GM12878 (cell line): ENCODE measurements at regions of chr14 and their contacts with region 1.

Region 1: GRCh38 chr14:89430391-89431236 is 13.6 kb upstream of the FOXN3 start:
- DNase-seq: peak; percentile 99
- ATAC-seq: peak; percentile 95
- H3K4me3 ChIP-seq: peak overlapping the region; percentile 29
- H3K27ac ChIP-seq: peak overlapping the region; percentile 97
- H3K4me1 ChIP-seq: peaks cover 49% of the 10 kb centered on the region
- H3K27me3 ChIP-seq: no peaks in the 10 kb centered on the region
- CTCF ChIP-seq: no peak
- EP300 ChIP-seq: peak; percentile 90 to 94
- POLR2A ChIP-seq: peak; percentile 37; the same call in 1 of the 2 replicates
- RAD21 ChIP-seq: peak; percentile 27; the same call in 1 of the 2 replicates

Region 2: GRCh38 chr14:89067293-89067972 is 363.2 kb before region 1 on chr14:
- CTCF ChIA-PET with region 1: no interaction called
- POLR2A ChIA-PET with region 1: no interaction called
- RAD21 ChIA-PET with region 1: no interaction called
- SMC1A ChIA-PET with region 1: no interaction called
- in situ Hi-C with region 1: no loop called
- intact Hi-C with region 1: no loop called
- DNase-seq: no peak
- ATAC-seq: no peak
- H3K4me3 ChIP-seq: no peak overlapping the region
- H3K27ac ChIP-seq: no peak overlapping the region
- H3K4me1 ChIP-seq: no peaks in the 10 kb centered on the region
- H3K27me3 ChIP-seq: peaks cover 0 to 2% of the 10 kb centered on the region in 2 experiments; a peak in 1 of 4 replicates
- CTCF ChIP-seq: no peak
- EP300 ChIP-seq: no peak
- POLR2A ChIP-seq: no peak
- RAD21 ChIP-seq: no peak

Region 3: GRCh38 chr14:89165189-89166181 is 265.1 kb before region 1 on chr14:
- CTCF ChIA-PET with region 1: interaction called, 6 read pairs
- POLR2A ChIA-PET with region 1: no interaction called
- RAD21 ChIA-PET with region 1: no interaction called
- SMC1A ChIA-PET with region 1: interaction called, 10 read pairs
- in situ Hi-C with region 1: loop called (anchors 10 kb)
- intact Hi-C with region 1: no loop called
- DNase-seq: peak; percentile 63
- ATAC-seq: peak; percentile 83
- H3K4me3 ChIP-seq: peak overlapping the region; percentile 62
- H3K27ac ChIP-seq: peak overlapping the region; percentile 97
- H3K4me1 ChIP-seq: peaks cover 19% of the 10 kb centered on the region
- H3K27me3 ChIP-seq: no peaks in the 10 kb centered on the region
- CTCF ChIP-seq: no peak
- EP300 ChIP-seq: no peak
- POLR2A ChIP-seq: 0 out of 2 replicates have a peak, but pooled peaks have one; percentile 55
- RAD21 ChIP-seq: no peak

Region 4: DNA sequence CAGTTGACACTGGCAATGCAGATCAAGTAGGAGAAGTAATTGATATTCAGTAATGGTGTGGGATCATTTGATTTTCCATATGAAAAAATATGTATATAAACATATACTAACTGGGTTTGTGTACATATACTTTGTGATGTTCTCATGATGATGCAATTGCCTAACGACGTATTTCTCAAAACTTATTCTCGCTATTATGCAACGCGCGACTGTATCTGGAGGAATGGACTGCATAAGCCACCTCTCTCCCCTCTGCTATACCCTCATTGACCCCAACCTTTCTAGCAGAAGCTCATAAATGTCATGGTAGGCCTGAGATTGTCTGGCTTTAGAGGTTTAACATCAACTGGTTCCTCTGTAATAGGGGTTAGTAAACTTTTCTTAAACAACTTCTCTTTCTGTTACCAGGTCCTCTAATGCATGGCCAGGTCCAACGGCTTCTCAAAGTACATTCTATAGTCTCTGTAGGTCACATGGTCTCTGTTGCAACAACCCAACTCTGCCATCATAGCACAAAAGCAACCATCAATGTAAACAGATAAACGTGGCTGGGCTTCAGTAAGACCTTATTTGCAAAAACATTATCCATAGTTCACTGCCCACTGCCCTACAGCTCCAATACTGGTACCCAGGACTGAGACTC is 72.8 kb before region 1 on chr14:
- CTCF ChIA-PET with region 1: no interaction called
- POLR2A ChIA-PET with region 1: no interaction called
- RAD21 ChIA-PET with region 1: no interaction called
- SMC1A ChIA-PET with region 1: no interaction called
- in situ Hi-C with region 1: no loop called
- intact Hi-C with region 1: no loop called
- DNase-seq: no peak
- ATAC-seq: no peak
- H3K4me3 ChIP-seq: no peak overlapping the region
- H3K27ac ChIP-seq: no peak overlapping the region
- H3K4me1 ChIP-seq: peaks cover 9% of the 10 kb centered on the region
- H3K27me3 ChIP-seq: no peaks in the 10 kb centered on the region
- CTCF ChIP-seq: no peak
- EP300 ChIP-seq: no peak
- POLR2A ChIP-seq: no peak
- RAD21 ChIP-seq: no peak

Region 5: GRCh38 chr14:89384023-89384422 is 46.6 kb before region 1 on chr14:
- CTCF ChIA-PET with region 1: interaction called, 4 read pairs
- POLR2A ChIA-PET with region 1: interaction called, 5 read pairs
- RAD21 ChIA-PET with region 1: interaction called, 10 read pairs
- SMC1A ChIA-PET with region 1: interaction called, 18 read pairs
- in situ Hi-C with region 1: no loop called
- intact Hi-C with region 1: no loop called
- DNase-seq: peak; percentile 92
- ATAC-seq: peak; percentile 92
- H3K4me3 ChIP-seq: peak overlapping the region; percentile 28
- H3K27ac ChIP-seq: peak overlapping the region; percentile 77
- H3K4me1 ChIP-seq: peaks cover 49% of the 10 kb centered on the region
- H3K27me3 ChIP-seq: no peaks in the 10 kb centered on the region
- CTCF ChIP-seq: no peak
- EP300 ChIP-seq: peak; percentile 46 to 54; a peak in 2 of 4 replicates
- POLR2A ChIP-seq: no peak
- RAD21 ChIP-seq: no peak

Region 6: DNA sequence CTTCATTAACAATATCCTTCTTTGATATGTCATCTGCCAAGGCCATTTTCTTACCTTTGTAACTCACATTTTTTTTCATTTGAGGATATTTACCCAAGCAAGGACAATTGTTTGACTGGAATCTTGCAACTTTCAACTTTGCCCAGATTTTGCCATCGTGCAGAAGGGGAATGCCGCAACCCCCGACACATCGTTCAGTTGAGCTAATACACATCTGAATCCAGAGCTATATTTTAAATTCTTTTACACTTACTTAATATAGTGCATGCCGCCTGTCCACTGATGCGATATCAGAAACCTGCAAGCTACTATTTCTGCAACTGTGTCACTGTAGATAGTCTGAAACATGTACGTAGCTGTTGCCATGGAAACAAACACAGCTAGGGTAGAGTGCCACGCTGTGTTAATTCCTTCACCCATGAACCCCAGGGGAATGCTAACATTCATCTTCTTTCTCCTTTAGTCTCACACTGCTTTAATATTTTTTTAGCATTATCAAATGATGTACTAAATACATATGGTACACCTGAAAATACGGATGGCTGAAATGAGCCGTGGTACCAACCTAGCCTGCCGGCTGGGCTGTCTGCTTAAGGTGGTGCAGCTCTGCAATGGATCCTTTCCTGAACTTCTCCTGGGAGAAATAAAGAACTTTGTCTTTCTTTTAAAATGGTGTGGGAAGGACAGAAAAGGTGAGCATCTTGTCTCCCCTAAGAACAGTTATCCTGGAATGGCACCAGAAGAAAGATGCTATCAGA is 63.4 kb after region 1 on chr14:
- CTCF ChIA-PET with region 1: no interaction called
- POLR2A ChIA-PET with region 1: interaction called, 3 read pairs
- RAD21 ChIA-PET with region 1: interaction called, 15 read pairs
- SMC1A ChIA-PET with region 1: interaction called, 17 read pairs
- in situ Hi-C with region 1: no loop called
- intact Hi-C with region 1: no loop called
- DNase-seq: peak; percentile 47
- ATAC-seq: peak; percentile 98
- H3K4me3 ChIP-seq: 0 out of 2 replicates have a peak overlapping the region, but pooled peaks have one; percentile 13
- H3K27ac ChIP-seq: no peak overlapping the region
- H3K4me1 ChIP-seq: peaks cover 6% of the 10 kb centered on the region
- H3K27me3 ChIP-seq: no peaks in the 10 kb centered on the region
- CTCF ChIP-seq: no peak
- EP300 ChIP-seq: no peak; a peak in 1 of 4 replicates
- POLR2A ChIP-seq: no peak
- RAD21 ChIP-seq: 0 out of 2 replicates have a peak, but pooled peaks have one; percentile 2

Region 7: GRCh38 chr14:89681086-89682018 is 250.7 kb after region 1 on chr14:
- CTCF ChIA-PET with region 1: no interaction called
- POLR2A ChIA-PET with region 1: no interaction called
- RAD21 ChIA-PET with region 1: interaction called, 13 read pairs
- SMC1A ChIA-PET with region 1: no interaction called
- in situ Hi-C with region 1: no loop called
- intact Hi-C with region 1: loop called (anchors 5 kb)
- DNase-seq: peak; percentile 73
- ATAC-seq: peak; percentile 88
- H3K4me3 ChIP-seq: peak overlapping the region; percentile 54
- H3K27ac ChIP-seq: peak overlapping the region; percentile 75
- H3K4me1 ChIP-seq: peaks cover 10% of the 10 kb centered on the region
- H3K27me3 ChIP-seq: no peaks in the 10 kb centered on the region
- CTCF ChIP-seq: no peak
- EP300 ChIP-seq: peak; percentile 83 to 85
- POLR2A ChIP-seq: no peak
- RAD21 ChIP-seq: no peak

Region 8: DNA sequence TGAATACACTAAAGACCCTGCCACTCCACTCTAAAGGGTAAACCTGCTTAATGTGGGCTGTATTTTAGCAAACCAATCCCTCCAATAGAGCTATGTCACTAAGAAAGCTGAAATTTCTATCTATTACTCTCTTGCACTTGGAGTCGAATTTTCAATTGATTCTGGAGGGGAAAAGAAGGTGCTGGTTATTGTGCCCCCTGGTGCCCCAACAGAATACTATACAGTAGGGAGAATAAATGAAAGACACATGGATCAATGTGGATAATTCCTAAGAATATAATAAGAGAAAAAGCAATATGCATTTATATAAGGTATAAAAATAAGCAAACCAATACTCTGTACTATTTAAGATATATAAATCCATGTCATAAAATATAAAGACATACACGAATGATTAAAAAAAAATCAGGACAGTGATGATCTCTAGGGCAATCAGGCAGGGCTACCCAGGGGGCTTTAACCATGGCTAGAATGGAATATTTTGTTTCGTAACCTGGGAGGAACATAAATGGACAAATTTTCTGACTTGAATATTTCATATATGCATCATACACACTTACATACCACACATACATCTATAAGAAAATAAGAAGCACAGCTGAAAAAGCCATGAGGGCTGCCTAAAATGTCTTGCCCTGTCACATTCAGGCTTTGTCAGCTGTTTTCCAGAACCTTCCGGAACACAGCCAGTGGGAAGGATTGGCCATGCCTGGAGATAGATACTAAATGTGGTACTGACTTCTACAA is 469.5 kb after region 1 on chr14:
- CTCF ChIA-PET with region 1: no interaction called
- POLR2A ChIA-PET with region 1: no interaction called
- RAD21 ChIA-PET with region 1: no interaction called
- SMC1A ChIA-PET with region 1: no interaction called
- in situ Hi-C with region 1: no loop called
- intact Hi-C with region 1: loop called (anchors 5 kb)
- DNase-seq: no peak
- ATAC-seq: peak; percentile 63
- H3K4me3 ChIP-seq: no peak overlapping the region
- H3K27ac ChIP-seq: no peak overlapping the region
- H3K4me1 ChIP-seq: no peaks in the 10 kb centered on the region
- H3K27me3 ChIP-seq: no peaks in the 10 kb centered on the region
- CTCF ChIP-seq: peak; percentile 44 to 56 (median 45); a peak in 5 of 6 replicates
- EP300 ChIP-seq: no peak
- POLR2A ChIP-seq: no peak
- RAD21 ChIP-seq: peak; percentile 77